Endothelial cell of umbilical vein (primary cell): ENCODE measurements at regions of chr1 and their contacts with region 1.

Region 1: GRCh38 chr1:227318003-227318852 is at the start of gene CDC42BPA:
- DNase-seq: peak; percentile 93
- H3K4me3 ChIP-seq: peak within 1 kb of the TSS; percentile 96 to 100 (median 97)
- H3K27ac ChIP-seq: peak within 1 kb of the TSS; percentile 92
- H3K4me1 ChIP-seq: peaks cover 15% of the 10 kb centered on the region
- H3K27me3 ChIP-seq: no peaks in the 10 kb centered on the region
- CTCF ChIP-seq: peak in 1 of 2 donors; percentile 3
- POLR2A ChIP-seq: no peak
- total RNA-seq, gene CDC42BPA: 88.1 and 92.6 TPM in 2 replicates

Region 2: DNA sequence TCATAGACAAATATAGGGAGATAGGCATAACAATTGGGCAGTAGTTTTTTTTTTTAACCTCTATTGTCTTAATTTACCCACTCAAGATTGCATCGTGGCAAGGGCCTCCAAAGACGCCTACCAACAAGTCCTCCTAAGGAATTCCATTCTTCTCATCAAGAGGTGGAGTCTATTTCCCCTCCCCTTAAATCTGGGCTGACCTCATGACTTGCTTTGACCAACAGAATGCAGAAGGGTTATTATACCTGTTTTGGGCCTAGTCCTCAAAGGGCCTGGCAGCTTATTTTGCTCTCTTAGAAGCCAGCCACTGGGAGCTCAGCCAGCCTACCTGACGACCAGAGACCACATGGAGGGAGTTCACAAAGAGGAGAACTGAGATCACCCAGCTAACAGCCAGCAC is 285.8 kb before region 1 on chr1:
- CTCF ChIA-PET with region 1: no interaction called
- POLR2A ChIA-PET with region 1: no interaction called
- dilution Hi-C with region 1: no loop called
- intact Hi-C with region 1: loop called (anchors 5 kb)
- DNase-seq: no peak
- H3K4me3 ChIP-seq: no peak overlapping the region
- H3K27ac ChIP-seq: no peak overlapping the region
- H3K4me1 ChIP-seq: peaks cover 5% of the 10 kb centered on the region
- H3K27me3 ChIP-seq: no peaks in the 10 kb centered on the region
- CTCF ChIP-seq: no peak
- POLR2A ChIP-seq: no peak

Region 3: DNA sequence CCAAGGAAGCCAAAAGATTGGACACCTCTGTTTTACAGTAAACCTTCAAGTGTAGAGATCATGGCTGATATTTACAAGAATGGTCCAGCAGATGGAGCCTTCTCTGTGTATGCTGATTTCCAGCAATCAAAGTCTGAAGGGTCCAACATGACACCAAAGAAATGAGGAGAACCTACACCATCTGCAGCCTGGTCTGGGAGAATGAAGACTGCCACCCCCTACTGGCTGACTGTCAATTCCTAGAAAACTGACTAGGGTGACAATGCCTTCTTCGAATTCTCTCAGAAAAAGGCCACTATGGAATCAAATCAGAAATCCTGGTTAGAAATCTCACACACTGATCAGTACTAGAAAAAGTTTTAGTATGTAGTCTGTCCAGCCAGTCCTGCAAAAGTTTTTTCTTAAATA is 83.2 kb before region 1 on chr1:
- CTCF ChIA-PET with region 1: interaction called, 4 read pairs
- POLR2A ChIA-PET with region 1: no interaction called
- dilution Hi-C with region 1: no loop called
- intact Hi-C with region 1: loop called (anchors 1 kb)
- DNase-seq: peak; percentile 79
- H3K4me3 ChIP-seq: no peak overlapping the region
- H3K27ac ChIP-seq: no peak overlapping the region
- H3K4me1 ChIP-seq: peaks cover 11% of the 10 kb centered on the region
- H3K27me3 ChIP-seq: no peaks in the 10 kb centered on the region
- CTCF ChIP-seq: peak; percentile 55 to 60
- POLR2A ChIP-seq: no peak

Region 4: DNA sequence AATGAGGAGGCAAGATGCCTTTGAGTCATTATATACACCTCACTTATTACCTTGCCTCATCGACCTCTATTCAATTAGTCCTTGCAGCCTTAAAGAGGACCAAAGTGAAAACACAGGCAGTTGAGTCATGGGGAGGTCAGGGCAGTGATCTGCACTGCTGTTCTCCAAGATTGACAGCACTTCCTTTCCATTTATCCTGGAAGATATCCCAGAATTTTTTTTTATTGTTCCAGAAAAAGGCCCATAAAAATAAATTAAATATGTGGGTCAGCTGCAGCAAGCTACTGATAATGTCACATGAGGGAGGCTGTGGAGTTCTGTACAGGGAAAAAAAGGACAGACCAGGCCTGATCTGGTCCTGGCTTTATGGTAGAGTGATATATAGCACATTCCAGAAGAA is 33.2 kb after region 1 on chr1:
- CTCF ChIA-PET with region 1: interaction called, 3 read pairs
- POLR2A ChIA-PET with region 1: interaction called, 6 read pairs
- dilution Hi-C with region 1: no loop called
- intact Hi-C with region 1: loop called (anchors 1 kb)
- DNase-seq: peak; percentile 96
- H3K4me3 ChIP-seq: no peak overlapping the region
- H3K27ac ChIP-seq: peak overlapping the region; percentile 53
- H3K4me1 ChIP-seq: peaks cover 34% of the 10 kb centered on the region
- H3K27me3 ChIP-seq: no peaks in the 10 kb centered on the region
- CTCF ChIP-seq: no peak
- POLR2A ChIP-seq: no peak

Region 5: GRCh38 chr1:227378871-227379554 is 60.8 kb after region 1 on chr1:
- CTCF ChIA-PET with region 1: no interaction called
- POLR2A ChIA-PET with region 1: no interaction called
- dilution Hi-C with region 1: no loop called
- intact Hi-C with region 1: no loop called
- DNase-seq: no peak
- H3K4me3 ChIP-seq: no peak overlapping the region
- H3K27ac ChIP-seq: no peak overlapping the region
- H3K4me1 ChIP-seq: no peaks in the 10 kb centered on the region
- H3K27me3 ChIP-seq: no peaks in the 10 kb centered on the region
- CTCF ChIP-seq: no peak
- POLR2A ChIP-seq: no peak

Region 6: GRCh38 chr1:227396539-227397353 is 78.5 kb after region 1 on chr1:
- CTCF ChIA-PET with region 1: interaction called, 5 read pairs
- POLR2A ChIA-PET with region 1: no interaction called
- dilution Hi-C with region 1: no loop called
- intact Hi-C with region 1: loop called (anchors 1 kb)
- DNase-seq: no peak
- H3K4me3 ChIP-seq: no peak overlapping the region
- H3K27ac ChIP-seq: no peak overlapping the region
- H3K4me1 ChIP-seq: peaks cover 16% of the 10 kb centered on the region
- H3K27me3 ChIP-seq: no peaks in the 10 kb centered on the region
- CTCF ChIP-seq: no peak
- POLR2A ChIP-seq: no peak

Region 7: GRCh38 chr1:227437495-227438008 is 119.3 kb after region 1 on chr1:
- CTCF ChIA-PET with region 1: interaction called, 6 read pairs
- POLR2A ChIA-PET with region 1: no interaction called
- dilution Hi-C with region 1: loop called (anchors 25 kb)
- intact Hi-C with region 1: loop called (anchors 1 kb)
- DNase-seq: peak; percentile 84
- H3K4me3 ChIP-seq: peak overlapping the region in 2 of 3 experiments; percentile 11 to 52
- H3K27ac ChIP-seq: no peak overlapping the region
- H3K4me1 ChIP-seq: peaks cover 12% of the 10 kb centered on the region
- H3K27me3 ChIP-seq: no peaks in the 10 kb centered on the region
- CTCF ChIP-seq: peak in 1 of 2 donors; percentile 32
- POLR2A ChIP-seq: no peak